Activated B cell treated with CpG ODN at 0.5 μM for 24 hours (primary cell): ENCODE measurements at regions of chr9 and their contacts with region 1.

Region 1: DNA sequence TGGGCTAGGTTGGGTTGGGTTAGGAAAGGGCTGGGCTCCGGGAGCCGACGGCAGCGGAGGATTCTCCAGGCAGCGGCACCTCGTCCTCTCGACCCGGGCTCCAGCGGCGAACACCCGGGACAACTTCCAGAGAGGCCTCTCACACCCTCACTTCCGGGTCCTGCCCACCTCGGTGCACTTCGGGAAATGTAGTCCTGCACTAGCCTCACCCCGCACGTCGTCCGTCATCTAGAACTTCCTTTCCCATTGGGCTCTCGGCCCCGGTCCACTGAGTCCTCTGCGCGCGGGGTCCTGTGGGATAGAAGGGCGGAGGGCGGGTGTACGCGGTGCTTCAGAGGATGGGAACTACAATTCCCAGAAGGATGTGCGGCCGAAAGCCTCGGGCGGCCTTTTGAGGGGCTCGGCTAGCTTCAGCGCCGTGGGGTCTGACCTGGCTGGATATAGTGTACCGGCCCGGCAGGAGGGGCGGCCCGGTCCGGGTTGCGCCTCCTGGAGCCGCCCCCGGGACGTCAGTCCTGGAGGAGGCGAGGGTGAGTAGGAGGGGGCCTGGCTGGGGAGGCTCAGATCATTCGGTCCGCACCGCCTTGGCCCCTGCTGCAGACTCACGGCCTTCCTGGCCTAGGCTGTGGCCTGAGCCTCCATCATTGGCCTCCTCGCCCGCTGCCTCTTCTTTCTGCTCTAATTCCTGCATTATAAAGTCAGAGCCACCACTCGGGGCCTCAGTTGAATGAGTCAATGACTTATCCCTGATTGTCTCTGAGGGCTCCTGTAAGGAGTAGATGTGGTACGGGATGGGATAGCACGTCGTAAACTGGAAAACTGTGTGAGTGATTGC is at the starts of genes ERP44 and INVS:
- DNase-seq: peak; percentile 86
- ATAC-seq: peak; percentile 99
- H3K4me3 Mint-ChIP-seq: peak within 1 kb of the TSS; percentile 100
- H3K27ac Mint-ChIP-seq: peak within 1 kb of the TSS; percentile 97
- H3K4me1 Mint-ChIP-seq: peaks cover 42% of the 10 kb centered on the region
- H3K27me3 Mint-ChIP-seq: no peaks in the 10 kb centered on the region
- CTCF ChIP-seq: no peak
- total RNA-seq, gene ERP44: 14.8 and 16.5 TPM in 2 replicates
- total RNA-seq, gene INVS: 26.7 and 34.0 TPM in 2 replicates

Region 2: GRCh38 chr9:99906403-99907207 is 192.5 kb before region 1 on chr9 and contains the start of gene STX17:
- CTCF ChIA-PET with region 1: no interaction called
- POLR2A ChIA-PET with region 1: no interaction called
- intact Hi-C with region 1: loop called (anchors 5 kb)
- DNase-seq: peak; percentile 90
- ATAC-seq: peak; percentile 87
- H3K4me3 Mint-ChIP-seq: peak within 1 kb of the TSS; percentile 98
- H3K27ac Mint-ChIP-seq: peak within 1 kb of the TSS; percentile 95
- H3K4me1 Mint-ChIP-seq: peaks cover 17% of the 10 kb centered on the region
- H3K27me3 Mint-ChIP-seq: no peaks in the 10 kb centered on the region
- CTCF ChIP-seq: no peak
- total RNA-seq, gene STX17: 32.2 and 39.2 TPM in 2 replicates

Region 3: GRCh38 chr9:100058699-100059579 is 40.2 kb before region 1 on chr9:
- CTCF ChIA-PET with region 1: no interaction called
- POLR2A ChIA-PET with region 1: no interaction called
- intact Hi-C with region 1: loop called (anchors 1 kb)
- DNase-seq: no peak
- ATAC-seq: peak; percentile 77
- H3K4me3 Mint-ChIP-seq: peak overlapping the region; percentile 67
- H3K27ac Mint-ChIP-seq: peak overlapping the region; percentile 72
- H3K4me1 Mint-ChIP-seq: peaks cover 51% of the 10 kb centered on the region
- H3K27me3 Mint-ChIP-seq: no peaks in the 10 kb centered on the region
- CTCF ChIP-seq: no peak

Region 4: DNA sequence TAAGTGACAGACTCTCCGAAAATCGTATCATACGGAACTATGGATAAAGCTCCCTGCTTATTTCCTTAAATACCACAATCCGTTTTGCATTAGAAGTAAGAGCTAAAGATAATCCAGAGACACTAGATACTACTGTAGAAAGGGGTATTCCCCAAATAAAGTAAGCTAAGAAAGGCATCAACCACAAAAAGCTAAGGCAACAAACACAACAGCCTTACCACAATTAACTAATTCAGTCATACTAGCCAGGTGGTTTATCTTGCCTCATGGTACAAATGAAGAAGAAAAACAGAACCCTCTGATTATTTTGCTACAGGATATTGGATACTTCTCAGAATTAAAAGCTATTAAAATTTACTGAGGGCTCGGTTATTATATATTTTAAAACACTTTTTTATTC is 14.4 kb before region 1 on chr9:
- CTCF ChIA-PET with region 1: no interaction called
- POLR2A ChIA-PET with region 1: interaction called, 10 read pairs
- intact Hi-C with region 1: loop called (anchors 1 kb)
- DNase-seq: no peak
- ATAC-seq: peak; percentile 65
- H3K4me3 Mint-ChIP-seq: peak overlapping the region; percentile 78
- H3K27ac Mint-ChIP-seq: peak overlapping the region; percentile 94
- H3K4me1 Mint-ChIP-seq: peaks cover 87% of the 10 kb centered on the region
- H3K27me3 Mint-ChIP-seq: no peaks in the 10 kb centered on the region
- CTCF ChIP-seq: no peak

Region 5: DNA sequence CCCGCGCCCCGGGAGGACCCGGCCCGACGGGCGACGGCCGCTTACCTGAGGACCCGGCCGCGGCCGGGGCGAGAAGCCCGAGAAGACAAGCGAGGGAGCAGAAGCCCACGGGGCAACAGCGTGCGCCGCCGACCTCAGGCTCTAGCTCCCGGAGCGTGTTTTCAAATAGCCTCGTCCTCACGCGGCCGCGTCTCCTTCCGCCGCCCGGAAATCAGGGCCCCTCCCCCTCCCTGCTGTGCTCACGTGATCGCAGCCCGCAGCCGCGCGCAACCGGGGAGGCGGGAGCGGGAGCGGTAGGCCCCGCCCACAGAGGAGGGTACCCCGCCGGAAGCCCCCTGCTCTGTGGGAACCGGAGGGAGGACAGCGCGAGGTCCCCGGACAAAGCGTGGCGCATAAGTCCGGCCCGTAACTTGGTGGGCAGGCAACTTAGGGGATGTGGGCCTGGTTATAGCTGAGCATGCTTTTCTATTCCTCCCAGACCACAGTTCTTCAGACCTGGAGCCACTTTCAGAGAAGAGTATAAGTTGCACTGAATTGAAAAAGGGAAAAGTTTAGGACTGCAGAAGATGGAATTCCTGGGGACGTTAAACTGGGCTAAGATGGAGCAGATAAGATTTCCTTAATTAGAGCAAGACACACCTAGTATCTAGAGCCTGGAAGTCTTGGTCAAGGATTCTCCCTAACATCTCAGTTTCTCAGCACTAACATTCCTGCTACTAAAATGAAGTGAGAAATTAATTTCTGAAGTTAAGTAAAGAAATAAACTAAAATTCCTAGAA is 253.8 kb after region 1 on chr9 and contains the start of gene TEX10:
- CTCF ChIA-PET with region 1: no interaction called
- POLR2A ChIA-PET with region 1: no interaction called
- intact Hi-C with region 1: loop called (anchors 2 kb)
- DNase-seq: peak; percentile 89
- ATAC-seq: peak; percentile 93
- H3K4me3 Mint-ChIP-seq: peak within 1 kb of the TSS; percentile 90
- H3K27ac Mint-ChIP-seq: peak within 1 kb of the TSS; percentile 87
- H3K4me1 Mint-ChIP-seq: peaks cover 67% of the 10 kb centered on the region
- H3K27me3 Mint-ChIP-seq: no peaks in the 10 kb centered on the region
- CTCF ChIP-seq: no peak
- total RNA-seq, gene TEX10: 26.5 and 28.7 TPM in 2 replicates

Region 6: DNA sequence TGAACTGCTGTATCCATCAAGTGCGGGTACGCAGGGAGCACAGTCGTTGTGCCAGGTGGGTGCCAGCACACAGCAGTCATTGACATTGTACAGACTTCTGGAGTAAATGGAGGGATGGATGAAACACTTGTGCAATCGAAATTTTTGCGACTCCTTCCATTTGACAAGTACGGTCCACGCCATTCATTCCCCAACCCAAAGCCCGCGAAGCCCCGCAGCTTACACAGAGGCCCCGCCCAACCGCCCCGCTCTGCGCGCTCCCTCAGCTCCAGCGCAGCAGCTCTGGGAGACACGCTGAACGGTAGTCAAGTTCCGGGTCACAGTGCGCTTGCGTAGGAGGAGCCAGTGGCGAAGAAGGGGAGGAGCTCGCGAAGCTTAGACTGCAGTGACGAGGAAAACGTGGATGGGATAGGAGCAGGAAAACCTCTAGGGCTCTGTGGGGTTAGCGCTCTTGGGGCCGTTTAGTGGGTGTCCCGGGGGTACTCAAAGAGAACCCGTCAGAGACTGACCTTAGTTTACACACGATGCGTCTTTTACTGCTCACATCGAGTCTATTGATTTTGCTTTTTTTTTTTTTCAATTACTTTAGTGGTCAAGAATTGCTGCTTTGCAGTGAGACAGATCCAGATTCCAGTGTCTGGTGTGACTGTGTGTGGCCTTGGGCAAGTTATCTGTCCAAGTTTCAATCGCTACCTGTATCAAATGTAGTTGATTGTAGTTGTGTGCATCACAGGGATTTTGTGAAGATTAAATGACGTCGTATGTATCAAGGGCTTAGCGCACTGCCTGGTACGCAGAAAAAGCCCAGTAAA is 312.6 kb after region 1 on chr9:
- CTCF ChIA-PET with region 1: no interaction called
- POLR2A ChIA-PET with region 1: no interaction called
- intact Hi-C with region 1: loop called (anchors 5 kb)
- DNase-seq: peak; percentile 76
- ATAC-seq: peak; percentile 100
- H3K4me3 Mint-ChIP-seq: peak overlapping the region; percentile 89
- H3K27ac Mint-ChIP-seq: peak overlapping the region; percentile 78
- H3K4me1 Mint-ChIP-seq: peaks cover 14% of the 10 kb centered on the region
- H3K27me3 Mint-ChIP-seq: peaks cover 9% of the 10 kb centered on the region
- CTCF ChIP-seq: no peak

Region 7: DNA sequence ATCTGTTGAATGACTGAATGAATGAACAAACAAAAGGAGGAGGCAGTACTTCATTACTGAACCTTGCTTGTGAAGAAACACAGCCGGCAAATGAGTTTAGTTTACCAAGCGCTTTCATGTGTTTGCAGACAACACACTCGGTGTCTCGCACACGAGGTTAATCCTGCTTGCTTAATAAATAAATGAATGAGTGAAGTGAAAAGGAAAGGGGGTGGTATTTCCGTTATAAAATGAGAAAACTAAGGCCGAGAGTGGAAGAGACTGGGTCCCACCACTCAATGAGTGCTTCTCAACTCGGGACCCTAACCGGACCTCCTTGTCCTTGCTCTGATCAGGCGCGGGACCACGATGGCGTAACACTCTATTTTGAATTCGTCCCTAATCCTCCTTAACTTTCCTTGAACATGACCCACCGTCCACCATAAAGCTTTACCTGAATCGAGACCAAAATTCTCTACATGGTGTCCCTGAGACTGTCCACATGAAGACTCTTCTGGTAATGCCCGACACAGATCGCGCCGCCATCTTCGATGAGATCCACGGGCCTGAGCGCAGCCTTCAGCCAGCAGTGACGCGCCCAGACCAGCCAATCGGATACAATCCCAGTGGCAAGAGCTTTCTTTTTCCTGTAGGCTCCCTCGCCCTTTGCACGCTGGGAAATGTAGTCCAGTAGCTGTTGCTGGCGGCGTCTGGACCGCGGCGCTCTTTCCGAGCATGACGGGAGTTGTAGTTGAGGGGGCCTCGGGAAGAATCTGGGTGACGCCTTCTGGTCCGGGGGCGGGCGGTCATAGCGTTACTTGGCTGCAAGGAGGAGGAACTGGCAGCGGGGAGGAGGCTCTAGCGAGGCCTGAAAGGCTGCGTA is 1299.2 kb after region 1 on chr9 and contains the starts of genes MRPL50 and ZNF189:
- CTCF ChIA-PET with region 1: no interaction called
- POLR2A ChIA-PET with region 1: no interaction called
- intact Hi-C with region 1: loop called (anchors 2 kb)
- DNase-seq: peak; percentile 82
- ATAC-seq: peak; percentile 94
- H3K4me3 Mint-ChIP-seq: peak within 1 kb of the TSS; percentile 97
- H3K27ac Mint-ChIP-seq: peak within 1 kb of the TSS; percentile 98
- H3K4me1 Mint-ChIP-seq: peaks cover 74% of the 10 kb centered on the region
- H3K27me3 Mint-ChIP-seq: no peaks in the 10 kb centered on the region
- CTCF ChIP-seq: no peak
- total RNA-seq, gene MRPL50: 14.0 and 16.1 TPM in 2 replicates
- total RNA-seq, gene ZNF189: 16.1 and 21.1 TPM in 2 replicates